ENCODE measurements at regions of chr1 and their contacts with region 1.

Region 1: DNA sequence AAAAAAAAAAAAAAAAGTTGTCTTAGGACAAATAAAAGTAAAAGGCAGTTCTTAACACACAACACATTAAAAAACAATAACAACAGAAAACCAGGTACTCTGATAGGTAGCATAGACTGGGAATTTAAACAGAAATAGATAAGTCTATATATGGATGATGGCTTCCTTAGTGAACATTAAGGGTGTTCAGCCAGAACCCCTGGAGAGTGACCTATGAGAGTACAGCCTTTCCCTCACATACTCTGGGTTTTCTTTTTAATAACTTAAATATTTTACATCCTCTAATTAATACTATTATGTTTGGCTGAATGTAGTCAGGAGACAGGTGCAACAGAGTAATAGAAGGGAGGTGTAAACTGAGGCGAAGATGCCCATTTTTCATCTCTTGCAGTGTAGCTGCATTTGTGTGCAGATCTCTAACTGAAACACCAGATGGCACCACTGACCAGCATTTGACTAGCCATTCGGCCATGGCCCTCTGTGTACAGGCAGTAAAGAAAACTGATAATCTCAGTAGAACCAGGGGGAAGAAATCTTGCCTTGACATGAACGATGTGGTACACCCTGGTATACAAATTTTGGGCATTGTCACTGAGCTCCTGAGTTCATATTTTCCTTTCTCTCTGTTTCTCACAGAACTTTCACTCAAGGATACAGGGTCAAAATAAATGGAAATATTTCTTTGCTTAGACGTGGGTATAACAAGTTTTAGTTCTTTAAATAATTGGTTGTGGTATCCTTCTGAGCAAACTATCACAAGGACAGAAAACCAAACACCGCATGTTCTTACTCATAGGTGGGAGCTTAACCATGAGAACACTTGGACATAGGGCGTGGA is 7.6 kb downstream of the TTF2 start:
- DNase-seq: peak; percentile 27 to 50
- ATAC-seq: peak; percentile 88 to 96
- H3K4me3 ChIP-seq: no peak overlapping the region
- H3K27ac ChIP-seq: no peak overlapping the region
- H3K4me1 ChIP-seq: no peaks in the 10 kb centered on the region
- H3K27me3 ChIP-seq: no peaks in the 10 kb centered on the region
- CTCF ChIP-seq: peak; percentile 74 to 87 (median 82)
- POLR2A ChIP-seq: no peak

Region 2: DNA sequence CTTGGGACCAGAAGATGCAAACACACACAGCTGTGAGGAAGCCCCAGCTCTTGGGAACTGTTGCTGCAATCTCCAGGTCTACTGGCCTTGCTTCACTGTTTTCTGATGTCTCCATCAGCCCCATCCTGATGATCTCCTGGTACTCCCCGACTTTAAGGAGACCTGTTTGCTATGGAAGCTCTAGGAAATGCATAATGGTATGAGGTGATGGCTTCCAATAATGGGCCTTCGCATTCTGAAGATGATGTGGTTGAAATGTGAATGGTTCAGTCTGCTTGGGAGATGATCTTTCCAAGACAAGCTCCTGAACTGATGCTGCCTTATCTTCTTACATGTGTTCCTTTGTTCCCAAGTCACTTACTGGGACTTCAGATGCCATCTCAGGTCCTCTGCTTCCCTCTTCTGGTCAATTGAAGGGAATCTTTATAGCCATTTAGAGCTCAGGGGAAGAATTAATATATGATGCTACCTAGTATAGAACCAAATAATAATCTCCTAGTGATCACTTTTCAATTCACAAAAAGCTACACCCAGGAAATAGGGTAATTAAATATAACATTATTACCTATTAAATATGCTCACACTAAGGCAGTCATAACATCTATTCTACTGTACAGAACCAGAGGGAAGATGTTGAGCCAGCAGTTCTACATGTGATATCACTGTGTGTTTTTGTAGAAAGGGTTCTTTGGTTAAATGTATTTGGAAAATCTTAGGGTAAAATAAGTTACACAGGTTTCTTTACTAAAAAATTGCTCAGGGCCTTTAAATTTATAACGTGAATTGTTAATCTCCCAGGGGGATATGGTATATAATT is 216.9 kb after region 1 on chr1:
- in situ Hi-C with region 1: loop called in 3 of 4 experiments (anchors 5 to 25 kb)
- intact Hi-C with region 1: loop called (anchors 2 kb)
- DNase-seq: no peak
- ATAC-seq: peak; percentile 52 to 75
- H3K4me3 ChIP-seq: no peak overlapping the region
- H3K27ac ChIP-seq: no peak overlapping the region
- H3K4me1 ChIP-seq: no peaks in the 10 kb centered on the region
- H3K27me3 ChIP-seq: no peaks in the 10 kb centered on the region
- CTCF ChIP-seq: peak; percentile 27 to 43 (median 33)
- POLR2A ChIP-seq: no peak

Region 3: DNA sequence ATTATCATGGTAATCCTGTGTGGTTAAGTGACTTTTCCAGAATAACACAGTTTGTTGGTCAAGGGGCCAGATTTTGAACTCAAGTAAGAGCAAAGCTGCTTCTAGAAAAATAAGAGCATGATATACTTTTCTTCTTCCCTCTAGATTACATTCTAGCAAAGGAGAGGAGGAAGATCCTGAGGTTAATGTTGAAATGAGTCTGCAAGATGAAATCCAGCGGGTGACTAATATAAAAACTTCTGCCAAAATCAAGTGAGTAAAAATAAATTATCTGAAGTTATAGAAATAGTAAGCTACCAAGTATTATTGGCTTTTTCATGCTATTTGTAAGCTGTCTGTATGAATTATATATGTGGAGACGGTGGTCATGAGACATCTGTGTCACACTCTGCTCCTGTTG is 874.5 kb after region 1 on chr1:
- in situ Hi-C with region 1: no loop called
- intact Hi-C with region 1: no loop called
- DNase-seq: no peak
- ATAC-seq: no peak
- H3K4me3 ChIP-seq: no peak overlapping the region
- H3K27ac ChIP-seq: no peak overlapping the region
- H3K4me1 ChIP-seq: no peaks in the 10 kb centered on the region
- H3K27me3 ChIP-seq: no peaks in the 10 kb centered on the region
- CTCF ChIP-seq: no peak
- POLR2A ChIP-seq: no peak

Measured in gastrocnemius medialis (tissue), 4 donors.